ENCODE measurements at regions of chr11 and their contacts with region 1.

Region 1: DNA sequence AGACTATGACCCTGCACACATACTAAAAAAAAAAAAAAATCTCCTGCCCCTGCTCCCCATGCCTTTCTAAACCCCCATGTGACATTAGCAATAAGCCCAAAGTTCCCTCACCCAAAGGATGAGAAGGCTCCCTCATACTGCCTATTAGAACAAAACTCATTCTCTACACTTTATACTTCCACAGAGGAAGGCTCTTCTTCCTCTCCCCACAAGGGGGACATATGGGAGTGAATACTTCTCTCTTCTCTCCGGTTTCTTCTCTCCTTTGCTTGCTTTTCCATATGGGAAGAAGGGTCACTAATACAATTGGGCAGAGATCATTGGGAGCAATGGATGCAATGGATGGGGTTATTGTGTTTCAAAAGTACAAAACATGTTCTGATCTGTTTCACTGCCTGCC is 3.3 kb downstream of the OR52L1 start:
- DNase-seq: no peak
- H3K4me3 Mint-ChIP-seq: no peak overlapping the region
- H3K27ac Mint-ChIP-seq: no peak overlapping the region
- H3K4me1 Mint-ChIP-seq: no peaks in the 10 kb centered on the region
- H3K27me3 Mint-ChIP-seq: no peaks in the 10 kb centered on the region

Region 2: GRCh38 chr11:6040874-6041273 is 57.4 kb after region 1 on chr11:
- intact Hi-C with region 1: loop called (anchors 10 kb)
- DNase-seq: no peak
- H3K4me3 Mint-ChIP-seq: no peak overlapping the region
- H3K27ac Mint-ChIP-seq: no peak overlapping the region
- H3K4me1 Mint-ChIP-seq: no peaks in the 10 kb centered on the region
- H3K27me3 Mint-ChIP-seq: peaks cover 14% of the 10 kb centered on the region

Measured in activated T-helper 2 cell treated with anti-CD3 and anti-CD28 coated beads, Interferon-gamma antibody, Interleukin-2, Interleukin-4, amounts not matched to agents 10 μg/mL and 5 μg/mL and 100 μg/mL, durations not matched to agents 14 hours and 24 hours and 36 hours (primary cell).